A549 (cell line): ENCODE measurements at regions of chr5 and their contacts with region 1.

Region 1: GRCh38 chr5:175729829-175730277 is 72.0 kb downstream of the HRH2 start:
- DNase-seq: peak; percentile 93 to 96
- ATAC-seq: peak; percentile 95 to 98
- H3K4me3 ChIP-seq: no peak overlapping the region
- H3K27ac ChIP-seq: peak overlapping the region; percentile 77 to 78
- H3K4me1 ChIP-seq: peaks cover 24% of the 10 kb centered on the region
- CTCF ChIP-seq: peak; percentile 99
- EP300 ChIP-seq: no peak
- POLR2A ChIP-seq: no peak
- RAD21 ChIP-seq: peak; percentile 100

Region 2: DNA sequence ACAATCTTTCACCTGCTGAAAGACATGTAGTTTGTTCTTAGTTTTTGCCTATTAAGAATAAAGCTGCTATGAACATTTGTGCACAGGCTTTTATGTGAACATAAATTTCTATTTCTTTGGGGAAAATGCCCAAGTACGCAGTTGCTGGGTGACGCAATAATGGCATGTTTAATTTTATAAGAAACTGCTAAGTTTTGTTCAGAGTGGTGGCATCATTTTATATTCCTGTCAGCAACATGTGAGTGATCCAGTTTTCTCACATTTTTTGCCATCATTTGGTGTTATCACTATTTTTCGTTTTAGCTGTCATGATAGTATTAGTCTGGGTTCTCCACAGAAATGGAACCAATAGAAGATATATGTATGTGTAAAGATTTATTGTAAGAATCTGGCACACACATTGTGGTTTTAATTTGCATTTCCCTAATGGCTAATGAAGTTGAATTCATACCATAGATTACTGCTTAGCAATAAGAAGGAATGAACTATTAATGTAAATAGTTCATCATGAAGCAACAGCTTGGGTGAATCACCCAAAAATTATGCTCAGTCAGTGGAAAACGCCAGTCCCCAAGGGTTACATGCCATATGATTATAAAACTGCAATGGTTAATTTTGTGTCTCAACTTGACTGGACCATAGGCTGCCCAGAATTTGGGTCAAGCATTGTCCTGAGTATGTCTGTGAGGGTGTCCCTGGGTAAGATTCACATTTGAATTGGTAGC is 646.8 kb before region 1 on chr5:
- CTCF ChIA-PET with region 1: no interaction called
- POLR2A ChIA-PET with region 1: no interaction called
- DNase-seq: no peak
- ATAC-seq: no peak
- H3K4me3 ChIP-seq: no peak overlapping the region
- H3K27ac ChIP-seq: no peak overlapping the region
- H3K4me1 ChIP-seq: peaks cover 14% of the 10 kb centered on the region
- CTCF ChIP-seq: no peak
- EP300 ChIP-seq: no peak
- POLR2A ChIP-seq: no peak
- RAD21 ChIP-seq: no peak

Region 3: DNA sequence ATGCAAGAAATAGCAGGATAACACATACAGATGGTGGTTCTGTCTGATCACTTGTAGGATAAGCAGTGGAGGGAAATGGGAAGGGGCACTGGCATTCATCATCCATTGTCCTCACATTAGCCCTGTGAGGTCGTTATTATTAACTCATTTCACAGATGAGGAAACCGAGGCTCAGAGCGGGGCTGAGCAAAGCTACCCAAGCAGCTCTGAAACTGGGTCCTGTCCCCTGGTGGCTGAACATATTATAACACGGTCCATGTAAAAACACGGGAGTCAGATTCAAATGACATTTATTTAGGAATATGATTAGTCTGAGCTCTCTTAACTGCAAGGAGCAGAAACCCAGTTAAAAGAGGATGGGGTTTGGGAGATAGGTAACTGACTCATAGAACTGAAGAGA is 28.9 kb before region 1 on chr5:
- CTCF ChIA-PET with region 1: interaction called, 16 read pairs
- POLR2A ChIA-PET with region 1: no interaction called
- DNase-seq: peak; percentile 25 to 40
- ATAC-seq: peak in 1 of 2 experiments; percentile 60; a peak in 2 of 6 replicates
- H3K4me3 ChIP-seq: no peak overlapping the region
- H3K27ac ChIP-seq: no peak overlapping the region
- H3K4me1 ChIP-seq: no peaks in the 10 kb centered on the region
- CTCF ChIP-seq: peak; percentile 37
- EP300 ChIP-seq: no peak
- POLR2A ChIP-seq: no peak
- RAD21 ChIP-seq: peak; percentile 29 to 41; a peak in 3 of 5 replicates

Region 4: DNA sequence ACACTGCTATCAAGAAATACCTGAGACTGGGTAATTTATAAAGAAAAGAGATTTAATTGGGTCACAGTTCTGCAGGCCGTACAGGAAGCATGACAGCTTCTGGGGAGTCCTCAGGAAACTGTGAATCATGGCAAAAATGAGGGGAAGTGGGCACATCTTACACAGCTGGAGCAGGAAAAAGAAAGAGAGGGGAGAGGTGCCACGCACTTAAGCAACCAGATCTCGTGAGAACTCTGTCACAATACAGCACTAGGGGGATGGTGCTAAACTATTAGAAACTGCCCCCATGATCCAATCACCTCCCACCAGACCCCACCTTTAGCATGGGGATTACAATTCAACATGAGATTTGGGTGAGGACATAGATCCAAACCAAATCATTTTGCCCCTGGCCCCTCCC is 36.0 kb after region 1 on chr5:
- CTCF ChIA-PET with region 1: interaction called, 17 read pairs
- POLR2A ChIA-PET with region 1: no interaction called
- DNase-seq: no peak
- ATAC-seq: no peak
- H3K4me3 ChIP-seq: no peak overlapping the region
- H3K27ac ChIP-seq: no peak overlapping the region
- H3K4me1 ChIP-seq: no peaks in the 10 kb centered on the region
- CTCF ChIP-seq: no peak
- EP300 ChIP-seq: no peak
- POLR2A ChIP-seq: no peak
- RAD21 ChIP-seq: no peak

Region 5: GRCh38 chr5:175809531-175810121 is 79.8 kb after region 1 on chr5:
- CTCF ChIA-PET with region 1: interaction called, 10 read pairs
- POLR2A ChIA-PET with region 1: no interaction called
- DNase-seq: peak; percentile 84 to 89
- ATAC-seq: peak; percentile 77 to 92
- H3K4me3 ChIP-seq: 0 out of 3 replicates have a peak overlapping the region, but pooled peaks have one; percentile 2
- H3K27ac ChIP-seq: peak overlapping the region; percentile 88 to 90
- H3K4me1 ChIP-seq: peaks cover 49% of the 10 kb centered on the region
- CTCF ChIP-seq: no peak
- EP300 ChIP-seq: peak; percentile 51 to 70; a peak in 1 of 5 replicates
- POLR2A ChIP-seq: no peak
- RAD21 ChIP-seq: peak; percentile 35 to 44; a peak in 3 of 5 replicates

Region 6: DNA sequence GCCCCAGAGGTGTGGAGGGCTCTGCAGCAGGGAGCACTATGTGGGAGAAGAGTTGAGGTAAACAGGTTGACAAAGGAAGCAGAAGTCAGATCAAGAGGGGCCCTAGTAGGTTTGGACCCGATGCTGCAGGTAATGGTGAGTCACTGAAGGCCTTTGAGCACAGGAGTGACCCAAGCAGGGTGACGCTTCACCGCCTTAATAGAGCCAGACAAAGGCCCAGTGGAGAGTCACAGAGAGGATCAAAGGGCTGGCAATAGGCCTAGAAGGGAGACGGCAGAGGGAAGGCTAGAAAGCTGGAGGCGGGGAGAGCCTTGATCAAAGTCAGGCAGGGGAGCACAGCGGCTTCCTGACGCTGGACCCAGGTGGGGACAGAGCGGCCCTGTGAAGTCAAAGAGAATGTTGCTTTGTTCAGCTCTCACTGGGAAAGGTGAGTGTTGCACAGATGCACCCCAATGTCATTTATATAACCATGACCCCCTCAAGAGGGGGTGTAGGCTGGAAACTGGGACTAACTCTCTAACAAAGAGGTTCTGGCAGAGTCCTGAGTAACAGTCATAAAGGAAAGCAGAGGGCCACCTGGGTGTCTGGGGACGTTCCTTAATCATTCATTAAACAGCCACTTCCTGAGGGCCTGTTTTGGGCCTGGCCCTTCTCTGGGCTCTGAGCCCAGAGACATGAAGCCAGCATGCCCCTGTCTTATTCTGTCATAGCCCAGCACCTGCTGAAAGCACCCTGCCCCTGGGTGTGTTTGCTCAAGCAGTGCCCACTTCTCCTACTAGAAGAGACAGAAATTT is 131.7 kb after region 1 on chr5:
- CTCF ChIA-PET with region 1: interaction called, 232 read pairs
- POLR2A ChIA-PET with region 1: no interaction called
- DNase-seq: peak; percentile 79 to 96
- ATAC-seq: peak; percentile 76 to 80
- H3K4me3 ChIP-seq: no peak overlapping the region
- H3K27ac ChIP-seq: peak overlapping the region; percentile 97 to 99
- H3K4me1 ChIP-seq: peaks cover 97% of the 10 kb centered on the region
- CTCF ChIP-seq: no peak
- EP300 ChIP-seq: peak; percentile 91 to 96; a peak in 4 of 5 replicates
- POLR2A ChIP-seq: no peak
- RAD21 ChIP-seq: peak in 1 of 2 experiments; percentile 24; a peak in 2 of 5 replicates

Region 7: DNA sequence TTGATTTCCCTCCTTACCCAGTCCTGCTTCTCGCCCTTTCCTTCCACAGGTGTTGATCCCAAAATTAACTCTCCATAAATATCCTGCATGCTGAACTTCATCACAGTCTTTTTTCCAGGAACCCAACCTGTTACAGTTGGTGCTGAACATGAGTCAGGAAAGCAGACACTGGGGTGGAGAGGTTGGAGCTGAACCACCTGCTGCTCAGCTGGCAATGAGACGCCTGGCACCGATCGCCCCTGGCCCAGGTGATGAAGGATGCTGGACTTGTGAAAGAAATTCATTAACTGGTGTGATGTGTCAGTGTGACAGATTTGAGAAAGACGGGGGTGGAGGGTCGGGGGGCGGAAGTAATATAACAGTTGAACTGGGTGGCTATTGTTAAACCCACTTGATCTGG is 172.2 kb after region 1 on chr5:
- CTCF ChIA-PET with region 1: interaction called, 51 read pairs
- POLR2A ChIA-PET with region 1: no interaction called
- DNase-seq: no peak
- ATAC-seq: no peak
- H3K4me3 ChIP-seq: no peak overlapping the region
- H3K27ac ChIP-seq: 0 out of 6 replicates have a peak overlapping the region, but pooled peaks of 1 of the 2 experiments have one; percentile 2
- H3K4me1 ChIP-seq: no peaks in the 10 kb centered on the region
- CTCF ChIP-seq: no peak
- EP300 ChIP-seq: no peak
- POLR2A ChIP-seq: no peak
- RAD21 ChIP-seq: no peak